MCF 10A (cell line): ENCODE measurements at regions of chr1 and their contacts with region 1.

Region 1: DNA sequence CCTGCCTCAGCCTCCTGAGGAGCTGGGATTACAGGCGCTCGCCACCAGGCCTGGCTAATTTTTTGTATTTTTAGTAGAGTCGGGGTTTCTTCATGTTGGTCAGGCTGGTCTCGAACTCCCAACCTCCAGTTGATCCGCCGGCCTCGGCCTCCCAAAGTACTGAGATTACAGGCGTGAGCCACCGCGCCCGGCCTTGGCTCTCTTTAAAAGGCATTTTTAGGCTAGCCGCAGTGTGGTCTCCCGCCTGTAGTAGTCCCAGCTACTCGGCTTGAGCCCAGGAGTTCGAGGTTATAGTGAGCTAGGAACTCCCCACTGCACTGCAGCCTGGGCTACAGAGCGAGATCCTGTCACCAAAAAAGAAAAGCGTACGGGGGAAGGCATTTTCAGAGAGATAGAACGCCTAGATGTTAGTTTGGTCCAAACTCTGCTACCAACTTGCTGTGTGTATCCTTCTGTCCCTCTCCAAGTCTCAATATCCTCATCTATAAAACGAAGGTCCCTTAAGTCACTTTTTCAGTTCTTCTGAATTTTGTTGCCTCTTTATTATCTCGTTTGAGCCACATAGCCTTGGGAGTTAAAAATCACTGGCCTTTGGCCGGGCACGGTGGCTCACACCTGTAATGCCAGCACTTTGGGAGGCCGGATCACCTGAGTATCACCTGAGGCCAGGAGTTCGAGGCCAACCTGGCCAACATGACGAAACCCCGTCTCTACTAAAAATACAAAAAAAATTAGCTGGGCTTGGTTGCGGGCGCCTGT is 734 bp downstream of the MED18 start:
- DNase-seq: peak; percentile 18
- H3K4me3 Mint-ChIP-seq: peak overlapping the region; percentile 93
- H3K27ac Mint-ChIP-seq: peak overlapping the region; percentile 98
- H3K4me1 Mint-ChIP-seq: peaks cover 17% of the 10 kb centered on the region
- H3K27me3 Mint-ChIP-seq: no peaks in the 10 kb centered on the region
- CTCF ChIP-seq: no peak

Region 2: DNA sequence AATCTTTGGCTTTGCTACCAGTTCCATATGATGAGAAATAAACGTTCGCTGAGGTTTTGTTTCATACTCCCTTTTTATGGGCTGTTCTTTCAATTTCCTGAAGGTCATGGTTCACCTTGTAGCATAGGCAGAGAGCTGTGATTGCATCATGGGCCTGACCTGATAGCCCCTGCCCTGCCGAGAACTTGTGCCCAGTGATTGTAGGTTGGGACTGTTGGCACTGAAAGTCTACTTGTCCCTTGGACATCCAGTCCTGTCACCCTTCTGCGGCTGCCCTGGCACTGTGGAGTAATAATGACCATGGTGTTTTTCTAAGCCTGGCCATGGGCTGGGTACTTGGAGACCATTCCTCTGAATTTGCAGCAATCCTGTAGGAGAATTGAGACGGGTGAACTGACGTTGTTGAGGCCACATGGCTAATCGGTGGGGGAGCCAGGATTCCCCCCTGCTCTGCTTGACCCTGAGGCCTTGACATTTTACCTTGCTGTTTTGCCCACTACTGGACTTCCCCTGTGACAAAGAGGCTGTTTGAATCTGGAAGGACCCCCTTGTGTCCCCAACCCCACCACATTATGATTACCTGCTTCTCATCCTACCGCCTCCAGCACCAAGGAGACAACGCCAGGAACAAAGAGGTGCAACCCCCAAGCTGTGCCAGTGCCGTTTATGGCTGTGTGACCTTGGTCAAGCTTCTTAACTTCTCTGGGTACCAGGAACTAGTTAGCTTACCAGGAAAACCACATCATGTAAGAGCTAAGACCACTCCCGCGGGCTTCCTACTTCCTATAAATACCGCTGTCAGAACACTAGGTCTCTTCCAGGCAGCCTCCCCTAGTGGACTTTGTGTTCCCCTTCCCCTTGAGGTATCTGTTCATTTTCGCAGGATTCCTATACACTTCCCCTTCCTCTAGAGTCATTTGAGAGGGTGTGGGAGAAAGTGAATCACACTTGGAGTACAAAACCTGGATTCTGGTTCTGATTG is 46.9 kb before region 1 on chr1:
- CTCF ChIA-PET with region 1: interaction called, 3 read pairs
- POLR2A ChIA-PET with region 1: interaction called, 18 read pairs
- intact Hi-C with region 1: no loop called
- DNase-seq: no peak
- H3K4me3 Mint-ChIP-seq: no peak overlapping the region
- H3K27ac Mint-ChIP-seq: no peak overlapping the region
- H3K4me1 Mint-ChIP-seq: no peaks in the 10 kb centered on the region
- H3K27me3 Mint-ChIP-seq: no peaks in the 10 kb centered on the region
- CTCF ChIP-seq: no peak

Region 3: DNA sequence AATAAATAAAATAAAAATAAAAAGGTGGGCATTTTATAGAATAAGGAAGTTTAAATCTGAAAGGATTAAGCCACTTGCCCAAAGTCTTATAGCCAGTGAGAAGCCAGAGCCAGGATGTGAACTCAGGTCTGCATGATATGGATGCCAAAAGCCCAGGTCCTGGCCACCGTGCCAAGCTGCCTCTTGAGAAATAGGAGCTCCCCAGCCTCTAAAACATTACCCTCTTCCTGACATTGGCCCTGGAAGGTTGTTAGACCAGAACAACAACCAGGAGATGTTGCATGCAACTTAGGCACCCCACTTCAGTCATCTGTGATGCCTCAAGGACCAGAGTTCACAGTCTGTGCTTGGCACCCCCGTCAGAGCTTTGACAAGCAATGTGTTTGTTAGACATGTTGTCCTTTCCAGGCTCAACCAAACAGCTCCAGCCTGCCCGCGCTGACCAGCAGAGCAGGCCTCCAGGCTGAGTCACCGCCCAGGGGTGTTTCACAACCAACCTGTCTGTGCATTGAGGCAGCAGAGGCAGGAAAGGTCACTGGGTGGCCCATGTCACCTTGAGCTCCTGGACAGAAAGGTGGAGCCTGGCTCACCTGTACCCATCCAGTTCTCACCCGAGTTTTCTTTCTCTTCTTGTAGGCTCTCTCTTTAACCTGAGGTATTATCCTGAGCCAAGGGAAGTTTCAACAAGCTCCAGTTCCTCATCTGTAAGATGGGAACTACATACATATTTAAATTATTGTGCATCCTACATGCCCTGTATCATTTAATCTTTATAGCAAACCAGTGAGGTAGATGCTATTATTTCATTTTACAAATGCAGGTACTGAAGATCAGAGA is 15.6 kb before region 1 on chr1:
- CTCF ChIA-PET with region 1: interaction called, 3 read pairs
- POLR2A ChIA-PET with region 1: interaction called, 15 read pairs
- intact Hi-C with region 1: no loop called
- DNase-seq: peak; percentile 87
- H3K4me3 Mint-ChIP-seq: peak overlapping the region; percentile 16
- H3K27ac Mint-ChIP-seq: peak overlapping the region; percentile 87
- H3K4me1 Mint-ChIP-seq: peaks cover 9% of the 10 kb centered on the region
- H3K27me3 Mint-ChIP-seq: no peaks in the 10 kb centered on the region
- CTCF ChIP-seq: no peak

Region 4: DNA sequence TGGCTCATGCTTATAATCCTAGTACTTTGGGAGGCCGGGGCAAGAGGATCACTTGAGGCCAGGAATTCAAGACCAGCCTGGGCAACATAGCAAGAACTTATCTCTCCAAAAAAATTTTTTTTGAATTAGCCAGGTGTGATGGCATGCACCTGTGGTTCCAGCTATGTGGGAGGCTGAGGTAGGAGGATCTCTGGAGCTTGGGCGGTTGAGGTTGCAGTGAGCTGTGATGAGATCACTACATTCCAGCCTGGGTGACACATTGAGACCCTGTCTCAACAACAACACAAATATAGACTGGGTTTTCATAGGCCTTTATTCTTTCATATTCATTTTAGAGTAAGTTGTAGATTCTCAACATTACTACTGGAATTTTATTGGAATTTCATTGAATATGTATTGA is 12.0 kb after region 1 on chr1:
- CTCF ChIA-PET with region 1: interaction called, 5 read pairs
- POLR2A ChIA-PET with region 1: interaction called, 16 read pairs
- intact Hi-C with region 1: no loop called
- DNase-seq: no peak
- H3K4me3 Mint-ChIP-seq: no peak overlapping the region
- H3K27ac Mint-ChIP-seq: no peak overlapping the region
- H3K4me1 Mint-ChIP-seq: no peaks in the 10 kb centered on the region
- H3K27me3 Mint-ChIP-seq: no peaks in the 10 kb centered on the region
- CTCF ChIP-seq: no peak

Region 5: DNA sequence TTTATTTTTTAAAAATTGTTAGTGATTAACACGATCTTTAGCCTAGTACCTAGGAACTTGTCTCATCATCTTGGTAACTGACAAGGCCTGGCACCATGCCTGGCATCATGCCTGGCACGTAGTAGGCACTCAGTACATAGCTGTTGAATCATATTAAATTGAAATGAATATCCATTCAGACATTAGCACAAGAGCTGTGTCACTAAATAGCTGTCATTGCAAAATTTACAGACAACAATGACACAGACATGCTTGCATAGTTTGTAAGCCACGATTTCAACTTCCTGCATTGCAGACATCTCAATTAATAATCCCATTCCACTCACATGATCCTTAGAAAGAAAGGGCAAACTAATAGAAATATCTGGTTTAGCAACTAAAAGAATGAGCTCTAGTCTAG is 24.5 kb after region 1 on chr1:
- CTCF ChIA-PET with region 1: interaction called, 7 read pairs
- POLR2A ChIA-PET with region 1: interaction called, 13 read pairs
- intact Hi-C with region 1: no loop called
- DNase-seq: peak; percentile 37
- H3K4me3 Mint-ChIP-seq: no peak overlapping the region
- H3K27ac Mint-ChIP-seq: peak overlapping the region; percentile 81
- H3K4me1 Mint-ChIP-seq: peaks cover 5% of the 10 kb centered on the region
- H3K27me3 Mint-ChIP-seq: no peaks in the 10 kb centered on the region
- CTCF ChIP-seq: no peak

Region 6: DNA sequence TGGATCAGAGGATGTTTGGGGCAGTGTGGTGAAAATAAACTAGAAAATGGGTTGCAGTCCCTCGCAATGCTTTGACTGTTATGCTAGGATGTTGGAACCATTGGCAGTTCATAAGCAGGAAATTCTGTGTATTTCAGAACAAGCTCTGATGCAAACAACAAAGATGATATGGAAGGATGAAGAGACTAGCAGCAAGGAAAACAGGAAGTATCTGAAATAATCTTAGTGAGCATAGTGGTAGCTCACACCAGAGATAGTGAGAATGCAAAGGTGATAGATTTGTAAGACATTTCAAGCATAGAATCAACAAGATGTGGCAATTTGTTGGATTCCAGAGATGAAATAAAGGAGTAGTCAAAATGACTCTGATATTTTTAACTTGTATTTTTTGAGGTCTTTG is 165.2 kb after region 1 on chr1:
- CTCF ChIA-PET with region 1: no interaction called
- POLR2A ChIA-PET with region 1: no interaction called
- intact Hi-C with region 1: no loop called
- DNase-seq: no peak
- H3K4me3 Mint-ChIP-seq: no peak overlapping the region
- H3K27ac Mint-ChIP-seq: no peak overlapping the region
- H3K4me1 Mint-ChIP-seq: no peaks in the 10 kb centered on the region
- H3K27me3 Mint-ChIP-seq: no peaks in the 10 kb centered on the region
- CTCF ChIP-seq: no peak